Ascending aorta (tissue), 2 donors: ENCODE measurements at regions of chr17 and their contacts with region 1.

Region 1: DNA sequence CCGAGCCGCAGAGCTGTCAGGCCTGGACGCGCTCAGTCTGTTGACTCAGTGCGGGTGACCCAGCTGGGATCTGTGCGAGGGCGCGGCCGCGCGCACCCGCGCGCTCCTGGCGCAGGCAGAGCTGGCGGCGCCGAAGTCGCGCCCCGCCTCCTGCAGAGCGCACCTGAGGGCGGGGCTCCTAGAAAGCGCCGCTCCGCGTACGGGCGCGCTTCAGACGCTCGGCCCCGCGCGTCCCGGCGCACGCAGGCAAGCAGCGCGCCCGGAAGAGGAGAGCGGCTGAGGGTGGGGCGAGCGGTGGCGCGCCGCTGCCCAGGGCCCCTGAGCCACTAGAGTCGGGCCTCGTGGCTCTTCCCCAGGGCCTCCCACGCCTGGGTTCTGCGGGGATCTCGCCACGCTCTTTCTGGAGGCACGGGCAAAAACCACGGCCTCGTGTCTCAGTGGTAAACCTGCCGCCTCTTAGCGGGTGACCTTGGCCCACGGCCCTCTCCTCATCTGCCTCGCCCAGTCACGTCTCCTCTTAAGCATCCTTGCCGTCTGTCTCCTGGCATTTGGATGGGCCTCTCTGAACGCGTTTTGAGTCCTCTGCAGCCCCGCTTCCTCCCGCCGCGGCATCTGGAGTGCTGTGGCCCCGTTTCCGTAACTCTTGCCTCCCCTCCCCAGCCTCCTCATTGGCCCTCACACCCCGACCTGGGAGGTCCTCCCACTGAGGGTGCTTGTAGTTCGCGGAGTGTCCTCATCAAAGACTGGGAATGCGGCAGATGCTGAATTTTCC is at the start of gene ABCA5:
- DNase-seq: peak; percentile 46 to 90
- H3K4me3 ChIP-seq: peak within 1 kb of the TSS; percentile 88 to 90
- H3K27ac ChIP-seq: peak within 1 kb of the TSS; percentile 62 to 63
- H3K4me1 ChIP-seq: peaks cover 0 to 15% of the 10 kb centered on the region in 2 donors
- H3K27me3 ChIP-seq: no peaks in the 10 kb centered on the region
- CTCF ChIP-seq: no peak
- total RNA-seq, gene ABCA5: 7.8 TPM

Region 2: GRCh38 chr17:67993596-67994361 is 1333.5 kb before region 1 on chr17:
- intact Hi-C with region 1: loop called (anchors 2 kb)
- DNase-seq: no peak
- H3K4me3 ChIP-seq: peak overlapping the region; percentile 73 to 91
- H3K27ac ChIP-seq: peak overlapping the region; percentile 91 to 97
- H3K4me1 ChIP-seq: peaks cover 4 to 9% of the 10 kb centered on the region in 2 donors
- H3K27me3 ChIP-seq: no peaks in the 10 kb centered on the region
- CTCF ChIP-seq: no peak

Region 3: DNA sequence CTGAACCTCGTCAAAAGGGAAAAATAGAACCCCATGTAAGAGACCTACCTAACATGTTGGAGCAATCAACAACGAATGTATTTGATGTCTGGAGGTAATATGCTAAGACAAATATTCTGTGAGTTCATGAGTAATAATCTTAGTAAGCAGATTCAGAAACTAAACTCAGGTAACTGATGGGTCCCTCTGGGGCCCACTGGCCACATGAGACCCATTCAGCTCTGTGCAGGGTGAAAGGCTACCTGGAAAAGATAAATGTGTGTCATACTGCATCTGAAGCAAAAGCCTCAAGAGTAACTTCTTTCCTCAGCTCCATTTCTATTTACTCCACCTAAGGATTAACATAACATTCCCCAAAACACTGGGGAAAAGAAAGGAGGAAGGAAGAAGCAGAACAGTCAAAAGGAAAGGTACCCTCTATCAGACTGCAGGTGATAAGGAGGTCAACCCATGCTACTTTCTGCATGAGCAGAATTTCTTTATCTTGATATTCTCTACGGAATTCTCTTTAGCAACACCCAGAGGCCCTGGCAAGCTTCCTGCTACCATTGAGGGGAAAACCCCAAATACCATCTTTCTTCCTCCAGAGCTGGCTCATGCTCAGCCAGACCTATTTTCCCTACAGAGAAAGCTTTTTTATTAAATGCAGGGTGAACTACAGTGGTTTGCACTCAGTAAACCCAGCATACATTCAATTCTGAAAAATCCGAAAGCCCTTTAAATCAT is 147.9 kb before region 1 on chr17:
- intact Hi-C with region 1: no loop called
- DNase-seq: no peak
- H3K4me3 ChIP-seq: no peak overlapping the region
- H3K27ac ChIP-seq: no peak overlapping the region
- H3K4me1 ChIP-seq: no peaks in the 10 kb centered on the region
- H3K27me3 ChIP-seq: no peaks in the 10 kb centered on the region
- CTCF ChIP-seq: no peak

Region 4: DNA sequence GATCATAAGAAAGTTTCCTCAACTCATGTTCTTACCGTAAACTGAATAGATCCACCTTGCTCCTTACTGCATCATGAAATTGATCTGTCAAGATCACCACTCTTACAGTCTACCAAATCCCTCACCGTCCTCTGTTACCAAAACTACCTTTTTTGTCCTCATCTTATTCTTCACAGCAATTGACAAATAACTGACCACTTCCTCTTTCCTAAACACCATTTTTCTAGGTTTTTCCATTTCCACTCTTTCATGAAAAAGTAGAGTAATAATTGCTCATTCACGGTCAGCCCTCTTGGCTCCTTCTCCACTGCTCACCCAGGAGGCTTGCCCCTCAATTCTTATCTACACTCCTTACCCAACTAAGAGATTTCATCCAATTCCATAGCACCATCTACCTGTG is 45.2 kb before region 1 on chr17:
- intact Hi-C with region 1: no loop called
- DNase-seq: no peak
- H3K4me3 ChIP-seq: no peak overlapping the region
- H3K27ac ChIP-seq: no peak overlapping the region
- H3K4me1 ChIP-seq: no peaks in the 10 kb centered on the region
- H3K27me3 ChIP-seq: no peaks in the 10 kb centered on the region
- CTCF ChIP-seq: no peak

Region 5: GRCh38 chr17:69473841-69474831 is 146.9 kb after region 1 on chr17:
- intact Hi-C with region 1: no loop called
- DNase-seq: no peak
- H3K4me3 ChIP-seq: no peak overlapping the region
- H3K27ac ChIP-seq: no peak overlapping the region
- H3K4me1 ChIP-seq: no peaks in the 10 kb centered on the region
- H3K27me3 ChIP-seq: no peaks in the 10 kb centered on the region
- CTCF ChIP-seq: no peak

Region 6: GRCh38 chr17:69525920-69526841 is 198.9 kb after region 1 on chr17:
- intact Hi-C with region 1: loop called (anchors 5 kb)
- DNase-seq: peak in 1 of 2 donors; percentile 64
- H3K4me3 ChIP-seq: no peak overlapping the region
- H3K27ac ChIP-seq: no peak overlapping the region
- H3K4me1 ChIP-seq: no peaks in the 10 kb centered on the region
- H3K27me3 ChIP-seq: no peaks in the 10 kb centered on the region
- CTCF ChIP-seq: peak; percentile 46 to 90 (median 83)